Activated T-helper 2 cell treated with anti-CD3 and anti-CD28 coated beads, Interferon-gamma antibody, Interleukin-2, Interleukin-4, amounts not matched to agents 10 μg/mL and 5 μg/mL and 100 μg/mL, durations not matched to agents 14 hours and 24 hours and 36 hours (primary cell): ENCODE measurements at regions of chr19 and their contacts with region 1.

Region 1: GRCh38 chr19:49937750-49938381 is 8.6 kb upstream of the NUP62 start:
- DNase-seq: peak; percentile 64
- H3K4me3 Mint-ChIP-seq: no peak overlapping the region
- H3K27ac Mint-ChIP-seq: no peak overlapping the region
- H3K4me1 Mint-ChIP-seq: peaks cover 4% of the 10 kb centered on the region
- H3K27me3 Mint-ChIP-seq: no peaks in the 10 kb centered on the region

Region 2: DNA sequence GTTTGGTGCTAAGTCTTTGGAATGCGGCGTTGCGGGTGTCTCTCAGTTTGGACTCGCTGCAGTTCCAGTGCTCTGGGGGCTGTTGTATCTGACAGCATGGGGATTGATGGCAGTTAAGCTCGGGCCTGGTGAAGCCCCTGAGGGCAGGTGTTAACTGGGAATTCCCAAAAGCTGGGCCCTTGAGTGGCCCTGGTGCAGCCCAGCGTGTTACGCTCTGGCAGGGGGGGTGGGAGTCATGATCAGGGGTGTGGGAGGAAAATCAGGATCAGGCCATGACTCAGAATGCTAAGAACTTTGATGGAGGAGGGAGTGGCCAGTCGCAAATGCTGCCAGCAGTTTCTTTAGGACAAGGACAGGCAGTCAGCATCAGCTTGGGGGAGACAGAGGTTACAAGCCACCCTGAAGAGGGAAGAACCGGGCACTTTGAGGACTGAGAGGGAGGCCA is 151.5 kb before region 1 on chr19:
- intact Hi-C with region 1: no loop called
- DNase-seq: no peak
- H3K4me3 Mint-ChIP-seq: no peak overlapping the region
- H3K27ac Mint-ChIP-seq: no peak overlapping the region
- H3K4me1 Mint-ChIP-seq: no peaks in the 10 kb centered on the region
- H3K27me3 Mint-ChIP-seq: no peaks in the 10 kb centered on the region

Region 3: DNA sequence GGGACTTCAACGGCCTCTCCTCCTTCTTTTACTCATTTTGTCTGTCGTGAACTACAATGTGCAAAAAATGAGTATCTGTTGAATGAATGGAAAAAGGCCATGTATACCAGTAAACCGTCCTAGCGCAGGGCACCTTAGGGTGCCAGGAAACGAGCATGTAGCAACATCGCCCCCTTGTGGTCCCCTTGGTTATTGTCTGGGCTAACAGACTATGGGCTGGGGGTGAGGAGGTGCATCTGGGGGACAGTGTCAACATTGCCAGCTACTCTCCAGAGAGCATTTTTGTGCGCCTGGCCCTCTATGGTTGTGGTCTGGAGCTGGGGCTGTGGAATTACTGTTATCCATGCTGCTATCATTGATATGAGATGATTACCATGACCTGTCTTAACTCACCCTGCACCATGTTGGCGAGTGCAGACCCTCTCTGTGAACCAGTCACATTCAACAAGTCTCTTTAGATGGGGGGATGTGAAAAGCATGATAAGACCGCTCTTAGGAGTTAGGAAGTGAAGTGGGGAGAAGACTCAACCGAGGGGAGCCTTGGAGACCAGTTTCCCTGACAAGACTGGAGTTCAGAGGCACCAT is 45.9 kb after region 1 on chr19:
- intact Hi-C with region 1: loop called (anchors 1 kb)
- DNase-seq: peak; percentile 56
- H3K4me3 Mint-ChIP-seq: no peak overlapping the region
- H3K27ac Mint-ChIP-seq: no peak overlapping the region
- H3K4me1 Mint-ChIP-seq: peaks cover 6% of the 10 kb centered on the region
- H3K27me3 Mint-ChIP-seq: no peaks in the 10 kb centered on the region

Region 4: DNA sequence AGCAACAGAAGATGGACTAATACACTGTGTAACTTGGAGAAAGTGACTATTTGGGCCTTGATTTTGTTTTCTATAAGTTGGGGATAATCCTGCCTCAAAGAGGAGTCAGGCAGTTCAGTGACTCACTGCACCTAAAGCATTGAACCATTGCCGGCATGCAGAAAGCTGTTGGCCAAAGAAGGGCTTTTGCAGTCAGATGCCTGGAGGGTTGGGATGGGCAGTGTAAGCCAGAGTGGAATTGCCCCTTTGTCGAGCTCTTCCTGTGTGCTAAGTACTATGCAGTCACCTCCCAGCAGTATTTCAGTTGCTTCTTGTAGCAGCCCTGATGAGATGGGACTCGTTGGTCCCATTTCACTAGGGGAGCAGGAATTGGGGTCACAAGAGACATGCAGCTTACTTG is 99.0 kb after region 1 on chr19:
- intact Hi-C with region 1: no loop called
- DNase-seq: no peak
- H3K4me3 Mint-ChIP-seq: no peak overlapping the region
- H3K27ac Mint-ChIP-seq: no peak overlapping the region
- H3K4me1 Mint-ChIP-seq: no peaks in the 10 kb centered on the region
- H3K27me3 Mint-ChIP-seq: no peaks in the 10 kb centered on the region

Region 5: GRCh38 chr19:50694815-50695145 is 756.9 kb after region 1 on chr19:
- intact Hi-C with region 1: no loop called
- DNase-seq: no peak
- H3K4me3 Mint-ChIP-seq: no peak overlapping the region
- H3K27ac Mint-ChIP-seq: no peak overlapping the region
- H3K4me1 Mint-ChIP-seq: no peaks in the 10 kb centered on the region
- H3K27me3 Mint-ChIP-seq: peaks cover 20% of the 10 kb centered on the region